H1 (cell line): ENCODE measurements at regions of chr5 and their contacts with region 1.

Region 1: DNA sequence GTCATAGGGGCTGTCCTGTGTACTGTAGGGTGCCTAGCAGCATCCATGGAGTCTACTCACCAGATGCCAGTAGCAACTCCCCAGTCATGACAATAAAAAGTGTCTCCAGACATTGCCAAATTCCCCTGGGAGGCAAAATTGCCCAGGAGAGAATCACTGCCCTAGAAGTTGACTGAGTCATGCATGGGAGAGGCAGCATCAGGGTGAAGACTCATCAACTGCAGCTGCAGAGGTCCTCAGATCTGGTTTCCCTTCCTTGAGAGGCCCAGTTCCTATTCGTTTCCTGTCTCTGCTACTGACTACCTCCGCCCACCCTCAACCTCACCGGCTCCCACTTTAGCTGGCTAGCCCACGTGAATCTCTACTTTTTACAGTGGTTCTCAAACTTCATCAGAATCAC is 88.6 kb upstream of the AGXT2 start:
- DNase-seq: no peak
- H3K4me3 ChIP-seq: no peak overlapping the region
- H3K27ac ChIP-seq: no peak overlapping the region
- H3K4me1 ChIP-seq: no peaks in the 10 kb centered on the region
- H3K27me3 ChIP-seq: no peaks in the 10 kb centered on the region
- CTCF ChIP-seq: no peak
- EP300 ChIP-seq: no peak
- POLR2A ChIP-seq: no peak
- RAD21 ChIP-seq: no peak

Region 2: DNA sequence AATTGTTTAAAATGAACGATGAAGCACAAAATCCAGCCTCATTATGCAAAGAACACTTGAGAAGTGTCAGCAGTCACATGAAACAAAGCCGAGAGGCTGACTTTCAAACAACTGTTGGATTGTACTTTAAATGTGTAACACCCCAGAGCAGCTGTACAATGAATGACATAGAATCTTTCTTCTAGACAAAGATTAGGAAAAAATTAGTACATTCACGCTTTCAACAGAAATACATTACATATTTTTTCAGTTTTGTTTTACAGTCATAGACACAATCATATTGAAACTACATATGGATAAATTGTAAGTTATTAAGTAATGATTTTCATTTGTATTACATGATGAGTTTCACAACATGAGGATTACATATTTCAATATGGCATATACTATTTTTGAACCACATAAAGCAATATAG is 78.0 kb before region 1 on chr5:
- CTCF ChIA-PET with region 1: no interaction called
- POLR2A ChIA-PET with region 1: no interaction called
- DNase-seq: no peak
- H3K4me3 ChIP-seq: no peak overlapping the region
- H3K27ac ChIP-seq: no peak overlapping the region
- H3K4me1 ChIP-seq: peaks cover 0 to 3% (median 0%) of the 10 kb centered on the region in 4 experiments; a peak in 1 of 7 replicates
- H3K27me3 ChIP-seq: no peaks in the 10 kb centered on the region
- CTCF ChIP-seq: no peak
- EP300 ChIP-seq: no peak
- POLR2A ChIP-seq: no peak
- RAD21 ChIP-seq: no peak

Region 3: DNA sequence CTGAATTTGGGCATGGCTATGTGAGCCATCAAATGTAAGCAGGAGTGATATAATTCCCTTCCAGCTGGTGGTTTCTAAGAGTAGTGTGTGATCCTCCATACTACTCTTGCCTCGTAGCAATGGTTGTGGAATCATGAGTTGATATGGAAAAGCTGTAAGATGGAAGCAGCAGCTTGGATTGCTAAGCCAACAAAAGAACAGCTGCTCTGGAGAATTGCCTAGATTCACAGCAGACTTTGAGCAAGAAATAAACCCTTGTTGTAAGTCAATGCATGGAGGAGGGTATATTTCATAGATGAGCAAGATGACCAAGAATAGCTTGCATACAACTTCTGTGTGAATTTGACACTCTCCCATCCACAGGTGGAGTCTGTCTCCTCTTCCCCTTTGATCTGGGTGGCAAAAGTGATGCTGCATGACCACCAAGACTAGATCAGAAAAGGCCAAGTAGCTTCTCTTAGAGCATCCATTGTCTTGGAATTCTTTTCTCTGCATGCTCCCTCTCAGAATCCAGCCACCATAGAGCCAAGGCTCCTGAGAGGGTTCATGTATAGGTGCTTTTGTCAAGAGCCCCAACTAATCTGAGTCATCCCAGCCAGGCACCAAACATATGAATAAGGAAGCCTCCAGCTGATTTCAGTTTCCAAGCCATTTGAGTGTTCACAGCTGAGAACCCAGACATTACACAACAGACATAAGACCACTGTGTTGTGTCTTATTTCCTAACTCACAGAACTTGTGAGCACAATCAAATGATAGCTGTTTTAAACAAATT is 14.9 kb after region 1 on chr5:
- CTCF ChIA-PET with region 1: interaction called, 15 read pairs
- POLR2A ChIA-PET with region 1: interaction called, 3 read pairs
- DNase-seq: no peak
- H3K4me3 ChIP-seq: no peak overlapping the region
- H3K27ac ChIP-seq: no peak overlapping the region
- H3K4me1 ChIP-seq: peaks cover 0 to 5% (median 1%) of the 10 kb centered on the region in 4 experiments; a peak in 2 of 7 replicates
- H3K27me3 ChIP-seq: no peaks in the 10 kb centered on the region
- CTCF ChIP-seq: no peak
- EP300 ChIP-seq: no peak
- POLR2A ChIP-seq: no peak
- RAD21 ChIP-seq: no peak